Panc1 (cell line): ENCODE measurements at regions of chr14 and their contacts with region 1.

Region 1: GRCh38 chr14:92106143-92106926 is at the start of gene ATXN3:
- DNase-seq: peak; percentile 83
- ATAC-seq: peak; percentile 98
- H3K4me3 ChIP-seq: peak within 1 kb of the TSS; percentile 94 to 95
- H3K27ac ChIP-seq: peak within 1 kb of the TSS; percentile 90
- H3K4me1 ChIP-seq: peaks cover 9% of the 10 kb centered on the region; the same call in 1 of the 2 replicates
- H3K27me3 ChIP-seq: no peaks in the 10 kb centered on the region
- CTCF ChIP-seq: peak; percentile 84
- total RNA-seq, gene ATXN3: 14.6 TPM

Region 2: GRCh38 chr14:91953170-91953985 is 153.0 kb before region 1 on chr14:
- CTCF ChIA-PET with region 1: no interaction called
- POLR2A ChIA-PET with region 1: no interaction called
- in situ Hi-C with region 1: no loop called
- intact Hi-C with region 1: no loop called
- DNase-seq: no peak
- ATAC-seq: no peak
- H3K4me3 ChIP-seq: no peak overlapping the region
- H3K27ac ChIP-seq: no peak overlapping the region
- H3K4me1 ChIP-seq: no peaks in the 10 kb centered on the region
- H3K27me3 ChIP-seq: peaks cover 2% of the 10 kb centered on the region; the same call in 1 of the 2 replicates
- CTCF ChIP-seq: no peak

Region 3: GRCh38 chr14:92004062-92004461 is 102.3 kb before region 1 on chr14:
- CTCF ChIA-PET with region 1: no interaction called
- POLR2A ChIA-PET with region 1: no interaction called
- in situ Hi-C with region 1: no loop called
- intact Hi-C with region 1: no loop called
- DNase-seq: no peak
- ATAC-seq: no peak
- H3K4me3 ChIP-seq: no peak overlapping the region
- H3K27ac ChIP-seq: no peak overlapping the region
- H3K4me1 ChIP-seq: no peaks in the 10 kb centered on the region
- H3K27me3 ChIP-seq: no peaks in the 10 kb centered on the region
- CTCF ChIP-seq: no peak

Region 4: DNA sequence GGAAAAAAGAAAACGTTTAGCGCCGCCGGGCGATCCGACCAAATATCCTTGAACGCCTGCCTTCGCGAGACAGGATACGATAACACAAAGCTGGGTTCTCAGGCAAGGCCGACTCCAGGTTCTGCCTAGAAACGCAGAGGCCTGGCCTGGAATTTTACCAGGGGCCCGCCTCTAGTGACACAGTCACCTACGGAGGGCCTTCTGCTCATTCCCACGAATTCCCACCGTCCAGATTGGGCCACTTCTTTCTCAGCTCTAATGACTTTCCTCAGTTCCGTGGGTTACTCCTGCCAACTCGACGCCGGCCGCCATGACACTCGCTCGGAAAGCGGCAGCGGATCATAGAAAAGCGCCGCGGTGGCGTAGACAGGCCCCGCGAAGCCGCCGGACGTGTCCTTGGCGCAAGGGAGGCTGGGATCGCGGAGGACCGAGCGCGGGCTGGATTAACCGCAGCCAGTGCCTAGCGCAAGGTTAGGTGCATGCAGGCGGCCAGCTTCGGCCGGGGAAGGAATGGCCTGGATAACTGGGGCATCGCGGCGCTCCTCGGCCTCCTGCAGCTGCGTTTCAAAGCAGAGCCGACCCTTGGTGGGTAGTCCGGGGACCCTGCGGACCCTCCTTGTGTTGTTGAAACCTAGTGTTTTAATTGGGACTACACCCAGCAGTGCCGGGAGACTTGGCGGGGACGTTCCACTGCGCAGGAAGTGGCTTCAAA is 66.5 kb before region 1 on chr14 and contains the start of gene TRIP11:
- CTCF ChIA-PET with region 1: interaction called, 3 read pairs
- POLR2A ChIA-PET with region 1: no interaction called
- in situ Hi-C with region 1: no loop called
- intact Hi-C with region 1: loop called (anchors 2 kb)
- DNase-seq: peak; percentile 51
- ATAC-seq: peak; percentile 99
- H3K4me3 ChIP-seq: peak within 1 kb of the TSS; percentile 86 to 87
- H3K27ac ChIP-seq: peak within 1 kb of the TSS; percentile 89
- H3K4me1 ChIP-seq: peaks cover 14% of the 10 kb centered on the region; the same call in 1 of the 2 replicates
- H3K27me3 ChIP-seq: no peaks in the 10 kb centered on the region
- CTCF ChIP-seq: no peak
- total RNA-seq, gene TRIP11: 37.3 TPM

Region 5: DNA sequence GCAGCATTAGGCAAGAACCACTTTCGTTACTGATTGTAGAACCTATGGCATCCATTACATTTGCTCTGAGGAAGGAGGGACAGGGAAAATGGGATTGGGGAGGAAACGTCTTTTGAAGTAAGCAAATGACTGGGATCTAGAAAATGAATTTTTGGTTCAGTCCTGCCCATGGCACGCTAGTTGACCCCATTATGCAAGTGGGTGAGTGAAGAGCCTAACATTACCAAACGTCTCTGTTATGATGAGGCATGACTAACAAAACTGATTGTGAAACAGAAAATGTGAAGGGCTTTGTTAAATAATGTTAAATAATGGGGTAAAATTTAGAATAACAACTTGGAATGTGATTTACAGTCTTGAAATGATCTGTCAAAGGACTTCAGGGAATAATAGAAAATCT is 54.3 kb after region 1 on chr14:
- CTCF ChIA-PET with region 1: no interaction called
- POLR2A ChIA-PET with region 1: no interaction called
- in situ Hi-C with region 1: no loop called
- intact Hi-C with region 1: no loop called
- DNase-seq: no peak
- ATAC-seq: no peak
- H3K4me3 ChIP-seq: no peak overlapping the region
- H3K27ac ChIP-seq: no peak overlapping the region
- H3K4me1 ChIP-seq: no peaks in the 10 kb centered on the region
- H3K27me3 ChIP-seq: no peaks in the 10 kb centered on the region
- CTCF ChIP-seq: no peak

Region 6: GRCh38 chr14:92386637-92387036 is 280.3 kb after region 1 on chr14:
- CTCF ChIA-PET with region 1: no interaction called
- POLR2A ChIA-PET with region 1: no interaction called
- in situ Hi-C with region 1: no loop called
- intact Hi-C with region 1: no loop called
- DNase-seq: no peak
- ATAC-seq: no peak
- H3K4me3 ChIP-seq: no peak overlapping the region
- H3K27ac ChIP-seq: no peak overlapping the region
- H3K4me1 ChIP-seq: no peaks in the 10 kb centered on the region
- H3K27me3 ChIP-seq: no peaks in the 10 kb centered on the region
- CTCF ChIP-seq: no peak